B cell (primary cell): ENCODE measurements at regions of chr1 and their contacts with region 1.

Region 1: GRCh38 chr1:43529206-43529731 is 1.4 kb upstream of the PTPRF start:
- DNase-seq: peak; percentile 83
- ATAC-seq: peak; percentile 71
- H3K4me3 ChIP-seq: no peak overlapping the region
- H3K4me3 Mint-ChIP-seq: peak overlapping the region; percentile 72
- H3K27ac ChIP-seq: no peak overlapping the region
- H3K27ac Mint-ChIP-seq: no peak overlapping the region
- H3K4me1 ChIP-seq: peaks cover 13 to 18% of the 10 kb centered on the region in 2 donors
- H3K4me1 Mint-ChIP-seq: peaks cover 16% of the 10 kb centered on the region
- H3K27me3 ChIP-seq: peaks cover 0 to 33% (median 22%) of the 10 kb centered on the region in 4 experiments
- H3K27me3 Mint-ChIP-seq: peaks cover 59% of the 10 kb centered on the region
- CTCF ChIP-seq: peak; percentile 94

Region 2: GRCh38 chr1:43227143-43227764 is 302.0 kb before region 1 on chr1:
- CTCF ChIA-PET with region 1: interaction called, 5 read pairs
- POLR2A ChIA-PET with region 1: no interaction called
- intact Hi-C with region 1: loop called (anchors 5 kb)
- DNase-seq: peak; percentile 87
- ATAC-seq: peak; percentile 96
- H3K4me3 ChIP-seq: no peak overlapping the region
- H3K4me3 Mint-ChIP-seq: no peak overlapping the region
- H3K27ac ChIP-seq: no peak overlapping the region
- H3K27ac Mint-ChIP-seq: no peak overlapping the region
- H3K4me1 ChIP-seq: peaks cover 4 to 9% of the 10 kb centered on the region in 2 donors
- H3K4me1 Mint-ChIP-seq: peaks cover 10% of the 10 kb centered on the region
- H3K27me3 ChIP-seq: no peaks in the 10 kb centered on the region
- H3K27me3 Mint-ChIP-seq: no peaks in the 10 kb centered on the region
- CTCF ChIP-seq: peak; percentile 95

Region 3: GRCh38 chr1:43650310-43651085 is 121.2 kb after region 1 on chr1:
- CTCF ChIA-PET with region 1: interaction called, 6 read pairs
- POLR2A ChIA-PET with region 1: no interaction called
- intact Hi-C with region 1: loop called (anchors 2 kb)
- DNase-seq: peak; percentile 97
- ATAC-seq: peak; percentile 77
- H3K4me3 ChIP-seq: peak overlapping the region; percentile 82 to 98 (median 92)
- H3K4me3 Mint-ChIP-seq: peak overlapping the region; percentile 92
- H3K27ac ChIP-seq: peak overlapping the region; percentile 84 to 86
- H3K27ac Mint-ChIP-seq: peak overlapping the region; percentile 94
- H3K4me1 ChIP-seq: peaks cover 23 to 25% of the 10 kb centered on the region in 2 donors
- H3K4me1 Mint-ChIP-seq: peaks cover 45% of the 10 kb centered on the region
- H3K27me3 ChIP-seq: no peaks in the 10 kb centered on the region
- H3K27me3 Mint-ChIP-seq: peaks cover under 1% of the 10 kb centered on the region
- CTCF ChIP-seq: no peak

Region 4: DNA sequence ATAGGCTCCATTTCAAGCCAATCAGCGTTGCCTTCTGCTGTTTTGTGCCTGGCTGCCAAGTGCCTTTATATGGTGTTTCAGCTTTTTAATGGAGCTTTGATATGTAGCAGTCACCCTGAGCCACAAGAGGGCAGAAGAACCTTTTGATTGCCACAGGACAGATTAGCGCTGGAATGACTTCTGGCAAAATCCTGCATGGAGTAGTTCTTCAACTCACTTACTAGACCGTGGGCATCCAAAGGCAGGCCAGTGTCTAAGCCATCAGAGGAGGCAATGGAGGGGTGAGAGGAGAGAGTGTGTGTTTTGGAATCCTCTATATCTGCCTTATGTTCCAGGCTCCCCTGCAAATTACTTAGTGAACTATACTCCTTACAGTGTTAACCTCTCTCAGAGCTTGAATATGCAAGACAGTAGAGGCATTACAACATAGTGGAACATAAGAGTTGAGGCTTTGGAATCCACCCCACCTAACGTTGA is 234.3 kb after region 1 on chr1:
- CTCF ChIA-PET with region 1: interaction called, 10 read pairs
- POLR2A ChIA-PET with region 1: no interaction called
- intact Hi-C with region 1: loop called (anchors 5 kb)
- DNase-seq: peak; percentile 66
- ATAC-seq: peak; percentile 60
- H3K4me3 ChIP-seq: no peak overlapping the region
- H3K4me3 Mint-ChIP-seq: no peak overlapping the region
- H3K27ac ChIP-seq: no peak overlapping the region
- H3K27ac Mint-ChIP-seq: no peak overlapping the region
- H3K4me1 ChIP-seq: no peaks in the 10 kb centered on the region
- H3K4me1 Mint-ChIP-seq: peaks cover 2% of the 10 kb centered on the region
- H3K27me3 ChIP-seq: no peaks in the 10 kb centered on the region
- H3K27me3 Mint-ChIP-seq: no peaks in the 10 kb centered on the region
- CTCF ChIP-seq: peak; percentile 77

Region 5: DNA sequence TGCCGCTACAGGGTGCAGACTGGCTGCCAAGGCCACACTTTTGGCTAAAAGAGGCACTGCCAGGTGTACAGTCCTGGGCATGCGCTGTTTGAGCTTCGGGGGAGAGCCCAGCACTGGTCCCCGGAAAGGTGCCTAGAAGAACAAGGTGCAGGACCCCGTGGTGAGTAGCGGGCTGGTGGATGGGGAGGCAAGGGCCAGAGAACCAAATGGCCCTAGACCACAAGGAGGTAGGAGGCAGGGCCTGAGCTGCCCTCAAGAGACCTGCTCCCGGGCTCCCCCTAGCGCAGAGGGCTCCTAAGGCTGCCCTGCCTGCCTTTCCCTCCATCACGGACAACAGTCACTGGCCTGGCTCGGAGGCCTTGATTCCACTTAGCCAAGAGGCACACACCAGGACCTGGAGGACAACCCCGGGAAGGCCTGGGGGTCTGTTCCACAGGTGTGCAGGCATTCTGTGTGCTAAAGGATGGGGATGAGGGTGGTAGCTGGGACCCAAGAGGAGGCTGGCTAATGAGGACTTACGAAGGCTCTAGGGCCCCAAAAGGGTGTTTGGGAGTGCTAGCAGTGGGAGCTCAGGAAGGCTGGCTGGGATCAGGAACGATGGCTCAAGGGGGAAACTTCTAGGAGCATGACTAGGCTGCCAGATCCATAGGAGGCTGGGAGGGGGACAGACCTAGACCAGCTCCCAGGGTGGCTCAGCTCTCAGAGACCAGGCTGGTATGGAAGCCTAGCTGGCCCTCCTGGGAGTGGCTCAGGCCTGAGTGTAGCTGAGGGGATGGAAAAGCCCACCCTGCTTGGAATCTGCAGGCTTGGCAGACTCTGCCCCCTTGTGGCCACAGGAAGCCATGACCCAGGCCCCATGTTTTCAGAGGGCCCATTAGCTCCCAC is 405.1 kb after region 1 on chr1:
- CTCF ChIA-PET with region 1: interaction called, 19 read pairs
- POLR2A ChIA-PET with region 1: no interaction called
- intact Hi-C with region 1: no loop called
- DNase-seq: peak; percentile 66
- ATAC-seq: peak; percentile 59
- H3K4me3 ChIP-seq: no peak overlapping the region
- H3K4me3 Mint-ChIP-seq: peak overlapping the region; percentile 41
- H3K27ac ChIP-seq: no peak overlapping the region
- H3K27ac Mint-ChIP-seq: no peak overlapping the region
- H3K4me1 ChIP-seq: peaks cover 29 to 30% of the 10 kb centered on the region in 2 donors
- H3K4me1 Mint-ChIP-seq: peaks cover 21% of the 10 kb centered on the region
- H3K27me3 ChIP-seq: peaks cover 0 to 44% (median 26%) of the 10 kb centered on the region in 4 experiments
- H3K27me3 Mint-ChIP-seq: peaks cover 26% of the 10 kb centered on the region
- CTCF ChIP-seq: peak; percentile 69

Region 6: GRCh38 chr1:44049839-44050238 is 520.6 kb after region 1 on chr1:
- CTCF ChIA-PET with region 1: interaction called, 26 read pairs
- POLR2A ChIA-PET with region 1: no interaction called
- intact Hi-C with region 1: no loop called
- DNase-seq: no peak
- ATAC-seq: no peak
- H3K4me3 ChIP-seq: no peak overlapping the region
- H3K4me3 Mint-ChIP-seq: no peak overlapping the region
- H3K27ac ChIP-seq: no peak overlapping the region
- H3K27ac Mint-ChIP-seq: no peak overlapping the region
- H3K4me1 ChIP-seq: peaks cover 0 to 3% of the 10 kb centered on the region in 2 donors
- H3K4me1 Mint-ChIP-seq: peaks cover 6% of the 10 kb centered on the region
- H3K27me3 ChIP-seq: peaks cover 0 to 7% (median 0%) of the 10 kb centered on the region in 4 experiments
- H3K27me3 Mint-ChIP-seq: peaks cover 18% of the 10 kb centered on the region
- CTCF ChIP-seq: no peak

Region 7: GRCh38 chr1:44318097-44319088 is 789.1 kb after region 1 on chr1:
- CTCF ChIA-PET with region 1: no interaction called
- POLR2A ChIA-PET with region 1: no interaction called
- intact Hi-C with region 1: loop called (anchors 5 kb)
- DNase-seq: peak; percentile 76
- ATAC-seq: no peak
- H3K4me3 ChIP-seq: no peak overlapping the region
- H3K4me3 Mint-ChIP-seq: no peak overlapping the region
- H3K27ac ChIP-seq: no peak overlapping the region
- H3K27ac Mint-ChIP-seq: peak overlapping the region; percentile 67
- H3K4me1 ChIP-seq: peaks cover 3 to 9% of the 10 kb centered on the region in 2 donors
- H3K4me1 Mint-ChIP-seq: peaks cover 9% of the 10 kb centered on the region
- H3K27me3 ChIP-seq: no peaks in the 10 kb centered on the region
- H3K27me3 Mint-ChIP-seq: no peaks in the 10 kb centered on the region
- CTCF ChIP-seq: peak; percentile 92